ENCODE measurements at regions of chr4 and their contacts with region 1.

Region 1: DNA sequence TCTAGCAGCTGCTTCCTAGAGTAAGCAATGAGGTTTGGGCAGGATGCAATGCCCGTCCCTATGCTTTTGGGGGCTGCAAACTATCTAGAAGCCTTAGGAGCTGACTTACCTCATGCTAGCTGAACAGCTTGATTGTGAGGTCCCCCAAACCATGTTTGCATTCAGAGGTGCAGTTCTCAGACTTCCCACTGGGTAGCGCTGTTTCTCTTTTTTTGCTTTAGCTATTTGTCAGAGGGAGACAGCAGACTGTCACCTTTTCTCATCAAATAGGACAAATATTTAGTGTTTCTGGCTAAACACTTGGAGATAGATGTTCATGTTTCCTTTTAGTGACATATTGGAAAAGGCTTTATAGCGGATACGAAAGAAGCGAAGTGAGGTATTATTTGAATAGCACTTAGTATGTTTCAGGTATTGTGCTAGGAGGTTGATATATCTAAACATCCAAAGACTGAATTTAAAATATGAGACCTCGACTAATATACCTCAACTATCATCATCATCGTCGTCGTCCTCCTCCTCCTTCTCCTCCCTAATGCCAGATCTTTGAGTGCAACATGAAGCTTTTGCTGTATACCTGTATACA is 18.7 kb upstream of the TMEM192 start:
- DNase-seq: peak in 41 of 42 donors; percentile 20 to 95 (median 82)

Region 2: DNA sequence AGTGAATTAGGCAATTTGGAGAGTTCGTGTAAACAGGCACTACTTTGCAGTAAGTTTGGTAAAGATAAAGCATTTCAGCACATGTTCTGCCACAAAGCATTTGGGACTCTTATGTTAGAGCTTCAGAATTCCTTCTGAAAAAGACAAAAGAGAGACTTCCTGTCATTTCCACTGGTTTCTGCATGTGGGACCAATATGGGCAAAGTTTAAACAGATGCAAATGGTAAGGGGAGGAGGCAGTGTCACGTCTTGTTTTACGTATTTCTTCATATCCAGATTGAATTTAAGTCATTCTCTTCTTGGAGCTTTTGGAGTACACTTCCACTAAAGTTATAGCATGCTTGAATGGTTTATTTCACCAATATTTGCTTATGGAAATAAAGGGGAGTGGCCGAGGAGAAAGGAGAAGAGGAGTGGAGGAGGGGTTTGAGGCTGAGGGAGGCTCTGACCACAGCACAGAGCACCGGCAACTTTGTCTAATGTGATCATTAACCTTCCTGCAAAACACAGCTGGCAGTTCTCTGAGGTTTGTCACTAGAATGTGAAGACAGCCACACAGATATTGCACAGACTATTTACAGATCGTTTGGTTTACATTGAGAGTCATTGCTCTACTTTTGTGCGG is 254.5 kb before region 1 on chr4 and contains the start of gene APELA:
- intact Hi-C with region 1: no loop called
- DNase-seq: no peak

Region 3: DNA sequence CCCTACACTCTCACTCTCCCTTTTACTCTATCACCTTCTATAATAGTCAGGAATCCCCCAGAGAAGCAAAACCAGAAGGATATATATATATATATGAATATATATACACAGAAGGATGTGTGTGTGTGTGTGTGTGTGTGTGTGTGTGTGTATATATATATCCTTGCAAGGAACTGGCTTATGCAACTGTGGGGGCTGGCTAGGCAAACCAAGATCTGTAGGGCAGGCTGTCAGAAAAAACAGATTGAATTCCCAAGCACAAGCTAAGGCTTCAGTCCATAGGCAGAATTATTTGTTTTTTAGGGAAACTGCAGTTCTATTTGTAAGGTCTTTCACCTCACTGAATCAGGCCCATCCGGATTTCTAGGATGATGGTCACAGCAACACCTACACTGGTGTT is 63.0 kb after region 1 on chr4:
- intact Hi-C with region 1: no loop called
- DNase-seq: peak in 4 of 42 donors; percentile 14 to 63 (median 38)

Region 4: DNA sequence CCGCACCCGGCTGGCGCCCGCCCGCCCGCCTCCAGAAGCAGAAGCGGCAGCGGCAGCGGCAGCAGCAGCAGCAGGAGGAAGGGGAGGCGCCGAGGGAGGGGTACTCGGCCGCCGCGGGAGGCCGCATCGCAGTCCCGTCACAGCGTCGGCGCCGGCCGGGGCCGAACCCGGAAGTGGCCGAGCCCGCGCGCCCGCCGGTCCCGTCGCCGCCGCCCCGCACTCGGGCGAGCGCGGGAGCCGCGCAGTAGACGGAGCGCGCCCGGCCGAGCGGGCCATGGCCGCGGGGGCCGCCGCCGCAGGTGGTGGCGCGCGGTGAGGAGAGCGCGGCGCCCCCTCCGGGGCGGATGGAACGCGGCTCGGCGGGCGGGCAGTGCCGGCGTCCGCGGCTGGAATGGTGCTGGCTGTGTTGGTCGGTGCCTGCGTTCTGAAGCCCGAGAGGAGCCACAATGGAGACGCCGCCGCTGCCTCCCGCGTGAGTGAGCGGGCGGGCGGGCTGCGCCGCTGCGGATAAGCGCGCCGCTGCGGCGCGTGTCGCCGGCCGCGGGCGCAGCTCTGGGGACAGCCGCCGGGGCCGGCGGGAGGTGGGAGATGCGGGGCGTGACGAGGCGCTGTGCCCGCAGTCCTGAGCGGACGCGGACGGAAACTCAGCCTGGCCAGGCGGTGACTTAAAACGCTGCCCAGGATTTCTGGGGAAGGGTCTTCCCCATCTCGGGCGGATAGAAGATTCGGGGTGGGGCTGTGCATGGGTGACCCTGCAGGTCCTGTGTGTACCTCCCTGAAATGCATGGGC is 76.3 kb after region 1 on chr4 and contains the start of gene KLHL2:
- intact Hi-C with region 1: loop called (anchors 10 kb)
- DNase-seq: peak; percentile 39 to 92 (median 82)

Region 5: DNA sequence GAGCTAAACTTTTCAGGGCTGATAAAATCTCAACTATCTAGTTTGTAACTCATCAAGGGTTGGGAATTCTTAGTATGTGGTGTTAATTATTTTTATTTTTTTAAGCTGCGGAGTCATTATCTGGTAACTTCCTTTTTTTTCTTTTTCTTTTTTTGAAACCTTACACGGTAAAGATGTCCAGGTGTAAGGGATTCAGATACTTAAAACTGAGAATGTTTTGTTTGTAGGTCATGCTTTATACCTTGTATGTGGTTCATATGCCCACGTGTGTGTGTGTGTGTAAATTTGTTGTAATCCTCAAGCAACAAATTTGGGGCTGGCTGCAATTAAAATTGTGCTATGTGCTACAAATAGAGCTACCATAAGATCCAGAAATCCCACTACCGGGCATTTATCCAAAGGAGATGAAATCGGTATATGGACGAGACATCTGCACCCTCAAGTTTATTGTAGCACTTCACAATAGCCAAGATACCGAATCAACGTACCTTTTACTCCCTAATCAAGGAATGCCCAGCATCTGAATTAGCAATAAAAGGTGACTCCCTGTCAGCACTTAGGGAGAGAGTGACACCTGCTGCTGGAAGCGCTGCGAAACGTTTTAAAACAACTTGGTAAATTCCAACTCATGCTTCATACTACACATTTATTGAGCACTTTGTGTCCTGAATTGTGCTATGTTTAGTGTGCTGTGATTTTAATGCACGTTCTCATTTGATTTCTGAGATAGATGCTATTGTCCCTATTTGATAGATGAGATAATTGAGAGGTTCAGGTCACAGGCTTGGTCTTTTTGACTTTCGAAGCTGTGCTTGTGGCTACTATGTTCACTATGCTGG is 212.2 kb after region 1 on chr4:
- intact Hi-C with region 1: loop called (anchors 5 kb)
- DNase-seq: peak in 18 of 42 donors; percentile 23 to 63 (median 41)

Measured in head of caudate nucleus (tissue), 42 donors.